PC-9 (cell line): ENCODE measurements at regions of chr1 and their contacts with region 1.

Region 1: DNA sequence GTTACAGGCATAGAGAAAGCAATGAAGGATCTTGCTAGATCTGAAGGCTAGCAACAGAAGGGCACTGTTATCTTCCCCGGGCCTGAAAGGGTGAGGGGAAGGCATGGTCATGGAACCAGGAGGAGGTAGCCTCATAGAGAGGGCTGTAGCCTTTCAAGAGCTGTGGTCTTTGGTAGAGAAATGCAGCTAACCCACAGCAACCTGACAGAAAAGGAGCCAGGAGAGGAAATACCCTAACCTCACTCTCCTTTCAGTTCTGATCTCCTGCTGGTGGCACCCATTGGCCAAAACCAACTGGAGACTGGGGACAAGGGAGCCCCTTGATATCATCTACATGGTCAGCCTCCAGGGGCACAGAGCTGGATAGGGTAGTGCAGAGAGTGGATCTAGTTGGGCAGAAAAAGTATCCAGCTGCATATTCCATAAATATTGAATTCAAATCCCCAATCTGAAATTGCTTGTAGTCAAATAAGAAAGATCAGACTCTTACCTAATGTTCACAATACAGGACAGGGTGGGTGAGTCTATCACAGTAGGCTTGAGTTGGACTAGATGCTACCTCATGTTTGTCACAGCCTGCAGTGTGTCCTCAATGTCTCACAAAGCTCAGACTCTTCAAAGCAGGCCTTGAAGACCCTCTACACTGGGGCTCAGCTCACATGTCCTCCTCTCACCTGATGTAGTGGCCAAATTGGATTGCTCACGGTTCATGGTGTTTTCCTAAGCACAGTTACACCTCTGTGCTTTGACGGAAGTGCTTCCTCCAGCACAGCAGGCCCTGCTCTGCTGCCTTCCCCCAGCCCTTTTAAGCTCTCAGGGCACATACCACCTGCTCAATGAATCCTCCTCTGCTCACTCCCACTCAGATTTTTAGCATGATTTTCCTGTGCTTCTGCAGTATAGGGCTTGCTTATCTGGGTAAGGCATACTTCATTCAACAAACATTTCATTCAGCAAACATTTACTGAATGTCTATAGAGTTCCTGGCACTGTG is 74.1 kb upstream of the JUN start:
- DNase-seq: no peak
- H3K4me3 ChIP-seq: no peak overlapping the region
- H3K27ac ChIP-seq: no peak overlapping the region
- H3K4me1 ChIP-seq: peaks cover 27% of the 10 kb centered on the region
- H3K27me3 ChIP-seq: no peaks in the 10 kb centered on the region
- CTCF ChIP-seq: no peak

Region 2: GRCh38 chr1:58842941-58843340 is 15.0 kb before region 1 on chr1:
- CTCF ChIA-PET with region 1: no interaction called
- POLR2A ChIA-PET with region 1: interaction called, 12 read pairs
- intact Hi-C with region 1: no loop called
- DNase-seq: no peak
- H3K4me3 ChIP-seq: no peak overlapping the region
- H3K27ac ChIP-seq: no peak overlapping the region; the same call in 1 of the 2 replicates
- H3K4me1 ChIP-seq: peaks cover 65% of the 10 kb centered on the region
- H3K27me3 ChIP-seq: no peaks in the 10 kb centered on the region
- CTCF ChIP-seq: no peak